Caco-2 (cell line): ENCODE measurements at regions of chr17 and their contacts with region 1.

Region 1: GRCh38 chr17:48944519-48945260 is at the start of gene SNF8:
- DNase-seq: peak; percentile 99 to 100
- H3K4me3 ChIP-seq: peak within 1 kb of the TSS; percentile 85
- H3K4me3 Mint-ChIP-seq: peak within 1 kb of the TSS; percentile 95
- H3K27ac Mint-ChIP-seq: peak within 1 kb of the TSS; percentile 95
- H3K4me1 ChIP-seq: peaks cover 9% of the 10 kb centered on the region
- H3K4me1 Mint-ChIP-seq: no peaks in the 10 kb centered on the region
- H3K27me3 ChIP-seq: no peaks in the 10 kb centered on the region
- H3K27me3 Mint-ChIP-seq: no peaks in the 10 kb centered on the region
- CTCF ChIP-seq: no peak
- total RNA-seq, gene SNF8: 457 and 461 TPM in 2 replicates

Region 2: DNA sequence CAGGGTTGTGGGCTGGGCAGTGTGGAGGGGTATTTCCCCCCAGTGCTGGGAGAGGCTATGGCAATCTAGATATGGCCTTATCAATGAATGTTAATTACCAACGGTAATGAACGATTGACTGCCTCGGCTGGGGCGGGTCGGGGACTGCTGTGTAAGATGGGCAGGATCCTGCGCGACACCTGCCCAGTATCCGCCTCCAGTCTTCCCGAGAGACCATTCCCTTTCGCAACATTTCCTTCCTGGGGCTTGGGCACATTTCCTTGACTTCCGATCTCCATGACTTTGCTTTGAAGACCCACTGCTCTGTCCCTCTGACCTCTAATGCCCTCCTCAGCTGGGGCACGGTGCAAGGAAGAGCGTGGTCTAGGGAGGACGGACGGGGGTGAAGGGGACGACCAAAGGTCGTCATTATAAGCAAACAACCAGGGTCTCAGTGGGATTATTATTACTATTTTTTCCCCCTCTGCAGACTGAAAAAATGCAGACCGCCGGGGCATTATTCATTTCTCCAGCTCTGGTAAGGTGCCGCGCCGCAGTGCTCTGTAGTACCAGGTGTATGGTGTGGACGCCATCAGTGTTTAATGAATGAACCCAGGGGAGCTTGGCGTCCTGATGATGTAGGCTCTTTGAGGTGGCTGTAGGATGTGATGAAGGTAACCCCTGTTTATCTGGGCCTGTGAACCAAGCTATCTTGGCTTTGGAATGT is 51.6 kb before region 1 on chr17:
- CTCF ChIA-PET with region 1: interaction called, 5 read pairs
- POLR2A ChIA-PET with region 1: interaction called, 27 read pairs
- intact Hi-C with region 1: loop called (anchors 1 kb)
- DNase-seq: no peak
- H3K4me3 ChIP-seq: peak overlapping the region; percentile 73
- H3K4me3 Mint-ChIP-seq: peak overlapping the region; percentile 84
- H3K27ac Mint-ChIP-seq: peak overlapping the region; percentile 90
- H3K4me1 ChIP-seq: peaks cover 13% of the 10 kb centered on the region
- H3K4me1 Mint-ChIP-seq: peaks cover 12% of the 10 kb centered on the region
- H3K27me3 ChIP-seq: no peaks in the 10 kb centered on the region
- H3K27me3 Mint-ChIP-seq: peaks cover 2% of the 10 kb centered on the region
- CTCF ChIP-seq: no peak

Region 3: DNA sequence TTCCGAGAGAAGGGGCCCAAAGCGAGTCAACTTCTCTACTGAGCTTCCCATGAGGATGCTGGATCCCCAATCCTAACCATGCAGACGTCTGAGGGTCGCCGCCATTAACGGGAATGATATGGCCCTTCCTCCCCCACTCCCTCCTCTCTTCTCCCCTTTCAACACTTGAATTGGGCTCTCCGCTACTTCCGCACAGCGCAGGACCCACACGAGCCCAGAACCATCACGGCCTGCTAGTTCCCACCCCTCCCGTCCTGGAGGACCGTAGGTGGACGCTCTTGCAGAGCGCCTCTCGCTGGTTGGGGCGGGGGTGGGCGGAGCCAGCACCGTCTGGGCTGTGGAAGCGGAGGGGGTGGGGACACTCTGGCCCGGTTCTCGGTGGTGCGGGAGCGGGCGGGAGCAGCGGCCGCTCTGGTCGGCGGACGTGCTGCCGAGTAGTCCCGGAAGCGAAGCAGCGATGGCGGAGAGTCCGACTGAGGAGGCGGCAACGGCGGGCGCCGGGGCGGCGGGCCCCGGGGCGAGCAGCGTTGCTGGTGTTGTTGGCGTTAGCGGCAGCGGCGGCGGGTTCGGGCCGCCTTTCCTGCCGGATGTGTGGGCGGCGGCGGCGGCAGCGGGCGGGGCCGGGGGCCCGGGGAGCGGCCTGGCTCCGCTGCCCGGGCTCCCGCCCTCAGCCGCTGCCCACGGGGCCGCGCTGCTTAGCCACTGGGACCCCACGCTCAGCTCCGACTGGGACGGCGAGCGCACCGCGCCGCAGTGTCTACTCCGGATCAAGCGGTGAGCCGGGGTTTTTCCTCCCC is 36.4 kb before region 1 on chr17 and contains the start of gene UBE2Z:
- CTCF ChIA-PET with region 1: interaction called, 10 read pairs
- POLR2A ChIA-PET with region 1: interaction called, 16 read pairs
- intact Hi-C with region 1: no loop called
- DNase-seq: peak; percentile 99
- H3K4me3 ChIP-seq: peak within 1 kb of the TSS; percentile 94
- H3K4me3 Mint-ChIP-seq: peak within 1 kb of the TSS; percentile 89
- H3K27ac Mint-ChIP-seq: peak within 1 kb of the TSS; percentile 95
- H3K4me1 ChIP-seq: peaks cover 26% of the 10 kb centered on the region
- H3K4me1 Mint-ChIP-seq: peaks cover 37% of the 10 kb centered on the region
- H3K27me3 ChIP-seq: no peaks in the 10 kb centered on the region
- H3K27me3 Mint-ChIP-seq: no peaks in the 10 kb centered on the region
- CTCF ChIP-seq: peak in 1 of 2 experiments; percentile 68
- total RNA-seq, gene UBE2Z: 182 and 187 TPM in 2 replicates

Region 4: DNA sequence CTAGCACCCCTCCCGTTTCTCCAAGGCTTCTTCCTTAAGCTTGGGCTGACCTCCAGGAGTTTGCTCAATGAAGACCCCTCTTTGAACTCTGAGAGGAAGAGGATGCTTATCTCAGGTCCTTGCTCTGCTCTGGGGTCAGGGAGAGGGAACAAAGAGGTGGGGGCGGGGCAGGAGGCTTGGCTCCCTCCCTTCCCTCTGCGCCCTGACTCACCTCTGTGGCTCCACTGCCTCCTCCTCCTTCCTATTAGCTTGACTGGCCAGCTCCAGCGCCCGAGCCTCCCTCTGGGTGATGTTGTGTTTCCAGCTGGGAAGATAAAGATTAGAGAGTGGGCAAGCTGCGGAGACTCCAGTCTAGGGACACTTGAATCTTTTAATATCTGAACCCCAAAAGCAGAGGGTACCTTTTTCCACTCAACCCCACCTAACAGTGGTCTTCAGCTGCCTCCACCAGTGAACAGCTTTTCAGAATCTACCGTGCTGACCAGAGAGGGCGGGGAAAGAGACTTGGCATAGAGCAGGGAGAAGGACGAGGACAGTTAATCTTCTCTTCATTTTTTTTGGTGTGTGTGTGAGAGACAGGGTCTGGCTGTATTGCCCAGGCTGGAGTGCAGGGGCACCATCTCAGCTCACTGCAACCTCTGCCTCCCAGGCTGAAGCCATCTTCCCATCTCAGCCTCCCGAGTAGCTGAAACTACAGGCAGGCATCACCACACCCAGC is 17.0 kb after region 1 on chr17:
- CTCF ChIA-PET with region 1: interaction called, 3 read pairs
- POLR2A ChIA-PET with region 1: interaction called, 11 read pairs
- intact Hi-C with region 1: no loop called
- DNase-seq: peak; percentile 73 to 80
- H3K4me3 ChIP-seq: no peak overlapping the region
- H3K4me3 Mint-ChIP-seq: peak overlapping the region; percentile 39
- H3K27ac Mint-ChIP-seq: peak overlapping the region; percentile 80
- H3K4me1 ChIP-seq: peaks cover 28% of the 10 kb centered on the region
- H3K4me1 Mint-ChIP-seq: peaks cover 24% of the 10 kb centered on the region
- H3K27me3 ChIP-seq: no peaks in the 10 kb centered on the region
- H3K27me3 Mint-ChIP-seq: no peaks in the 10 kb centered on the region
- CTCF ChIP-seq: no peak

Region 5: GRCh38 chr17:48997083-48997826 is 52.6 kb after region 1 on chr17 and contains the start of gene IGF2BP1:
- CTCF ChIA-PET with region 1: interaction called, 6 read pairs
- POLR2A ChIA-PET with region 1: interaction called, 62 read pairs
- intact Hi-C with region 1: loop called (anchors 1 kb)
- DNase-seq: peak; percentile 93 to 95
- H3K4me3 ChIP-seq: peak within 1 kb of the TSS; percentile 82
- H3K4me3 Mint-ChIP-seq: peak within 1 kb of the TSS; percentile 86
- H3K27ac Mint-ChIP-seq: peak within 1 kb of the TSS; percentile 94
- H3K4me1 ChIP-seq: peaks cover 38% of the 10 kb centered on the region
- H3K4me1 Mint-ChIP-seq: peaks cover 40% of the 10 kb centered on the region
- H3K27me3 ChIP-seq: no peaks in the 10 kb centered on the region
- H3K27me3 Mint-ChIP-seq: no peaks in the 10 kb centered on the region
- CTCF ChIP-seq: no peak
- total RNA-seq, gene IGF2BP1: 583 and 601 TPM in 2 replicates

Region 6: DNA sequence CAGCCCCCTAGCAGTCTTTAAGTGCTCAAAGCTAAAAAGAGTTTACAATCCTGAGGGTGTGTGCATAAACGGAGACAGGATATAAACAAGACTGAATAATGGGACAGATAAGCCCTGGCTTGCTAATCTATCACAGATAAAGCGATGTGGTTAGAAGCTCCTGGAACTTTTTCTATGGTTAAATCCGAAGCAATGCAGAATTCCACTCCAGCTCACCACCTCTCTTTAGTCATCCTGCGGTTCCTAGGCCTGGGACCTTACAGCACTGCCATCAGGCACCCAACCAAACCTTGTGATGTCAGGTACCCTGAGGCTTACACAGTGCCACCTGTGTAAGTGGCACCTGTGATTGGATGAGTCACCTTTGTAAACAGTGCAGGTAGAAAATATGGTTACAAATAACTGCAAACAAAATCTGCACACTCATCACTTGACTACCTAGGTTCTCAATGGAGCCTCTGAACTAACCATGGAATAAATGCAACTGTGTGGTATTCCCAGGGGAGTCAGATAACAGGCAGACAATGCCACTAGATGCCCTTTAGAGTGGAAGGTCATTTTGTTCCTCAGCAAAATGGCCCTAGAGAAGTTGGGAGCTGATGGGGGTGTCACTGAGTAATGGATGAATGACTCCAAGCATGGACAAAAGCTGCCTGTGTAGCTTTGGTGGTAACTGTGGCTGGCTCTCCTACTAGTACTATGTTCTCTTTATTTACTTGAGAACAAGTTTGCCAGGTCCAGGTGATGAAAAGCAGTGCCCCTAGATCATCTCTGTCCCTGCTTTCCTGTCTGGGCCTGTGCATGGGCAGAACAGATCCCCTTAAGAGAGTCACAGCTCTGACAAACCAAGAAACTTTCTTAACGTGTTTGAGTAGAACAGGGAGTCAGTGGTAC is 156.6 kb after region 1 on chr17:
- CTCF ChIA-PET with region 1: interaction called, 3 read pairs
- POLR2A ChIA-PET with region 1: interaction called, 11 read pairs
- intact Hi-C with region 1: no loop called
- DNase-seq: peak; percentile 59 to 62
- H3K4me3 ChIP-seq: no peak overlapping the region
- H3K4me3 Mint-ChIP-seq: no peak overlapping the region
- H3K27ac Mint-ChIP-seq: peak overlapping the region; percentile 50
- H3K4me1 ChIP-seq: peaks cover 42% of the 10 kb centered on the region
- H3K4me1 Mint-ChIP-seq: peaks cover 25% of the 10 kb centered on the region
- H3K27me3 ChIP-seq: no peaks in the 10 kb centered on the region
- H3K27me3 Mint-ChIP-seq: no peaks in the 10 kb centered on the region
- CTCF ChIP-seq: no peak

Region 7: GRCh38 chr17:49201481-49201927 is 256.8 kb after region 1 on chr17:
- CTCF ChIA-PET with region 1: no interaction called
- POLR2A ChIA-PET with region 1: no interaction called
- intact Hi-C with region 1: no loop called
- DNase-seq: no peak
- H3K4me3 ChIP-seq: no peak overlapping the region
- H3K4me3 Mint-ChIP-seq: no peak overlapping the region
- H3K27ac Mint-ChIP-seq: no peak overlapping the region
- H3K4me1 ChIP-seq: peaks cover 9% of the 10 kb centered on the region
- H3K4me1 Mint-ChIP-seq: peaks cover 4% of the 10 kb centered on the region
- H3K27me3 ChIP-seq: no peaks in the 10 kb centered on the region; the same call in 1 of the 2 replicates
- H3K27me3 Mint-ChIP-seq: peaks cover 3% of the 10 kb centered on the region
- CTCF ChIP-seq: no peak